WTC11 (cell line): ENCODE measurements at regions of chr12 and their contacts with region 1.

Region 1: GRCh38 chr12:52416383-52416750 is 10.2 kb upstream of the KRT82 start:
- DNase-seq: no peak
- ATAC-seq: no peak
- H3K4me3 Mint-ChIP-seq: no peak overlapping the region
- H3K27ac Mint-ChIP-seq: no peak overlapping the region
- H3K4me1 Mint-ChIP-seq: peaks cover 9% of the 10 kb centered on the region
- H3K27me3 Mint-ChIP-seq: no peaks in the 10 kb centered on the region
- CTCF ChIP-seq: no peak

Region 2: DNA sequence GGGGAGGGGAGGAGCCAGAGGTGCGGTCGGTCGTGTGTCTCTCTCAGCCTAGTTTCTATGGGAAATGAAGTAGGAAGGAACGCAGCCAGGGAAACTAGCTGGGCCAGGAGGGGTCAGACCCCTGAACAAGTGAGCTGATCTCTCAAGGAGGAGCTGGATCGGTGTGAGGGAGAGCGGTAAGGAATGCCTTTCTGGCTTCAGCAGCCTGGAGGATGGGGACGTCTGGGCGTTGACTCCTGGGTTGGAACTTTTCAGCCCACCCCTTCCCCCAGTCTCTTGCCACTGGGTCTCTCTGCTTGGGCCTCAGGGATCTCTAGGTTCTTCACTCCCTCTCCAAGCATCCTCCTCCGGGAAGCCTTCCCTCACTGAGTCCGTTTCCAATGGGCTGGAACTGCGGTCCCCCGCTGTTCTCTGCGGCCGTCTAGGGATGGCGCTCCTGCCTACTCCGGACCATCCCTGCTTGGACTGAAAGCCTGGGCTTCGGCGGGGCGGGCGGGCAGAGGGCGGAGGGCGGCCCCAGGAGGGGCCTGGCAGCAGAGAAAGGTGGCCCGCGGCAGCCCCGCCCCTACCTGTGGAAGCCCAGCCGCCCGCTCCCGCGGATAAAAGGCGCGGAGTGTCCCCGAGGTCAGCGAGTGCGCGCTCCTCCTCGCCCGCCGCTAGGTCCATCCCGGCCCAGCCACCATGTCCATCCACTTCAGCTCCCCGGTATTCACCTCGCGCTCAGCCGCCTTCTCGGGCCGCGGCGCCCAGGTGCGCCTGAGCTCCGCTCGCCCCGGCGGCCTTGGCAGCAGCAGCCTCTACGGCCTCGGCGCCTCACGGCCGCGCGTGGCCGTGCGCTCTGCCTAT is 183.5 kb before region 1 on chr12 and contains the start of gene KRT7:
- CTCF ChIA-PET with region 1: no interaction called
- POLR2A ChIA-PET with region 1: no interaction called
- DNase-seq: peak; percentile 58
- ATAC-seq: peak; percentile 61
- H3K4me3 Mint-ChIP-seq: peak within 1 kb of the TSS; percentile 78
- H3K27ac Mint-ChIP-seq: no peak within 1 kb of the TSS; the same call in 1 of the 2 replicates
- H3K4me1 Mint-ChIP-seq: peaks cover 50% of the 10 kb centered on the region
- H3K27me3 Mint-ChIP-seq: peaks cover 51% of the 10 kb centered on the region
- CTCF ChIP-seq: no peak
- total RNA-seq, gene KRT7: 10.6 to 11.5 TPM (median 11.4 TPM) in 3 replicates

Region 3: GRCh38 chr12:52404956-52405355 is 11.4 kb before region 1 on chr12:
- CTCF ChIA-PET with region 1: interaction called, 10 read pairs
- POLR2A ChIA-PET with region 1: no interaction called
- DNase-seq: no peak
- ATAC-seq: no peak
- H3K4me3 Mint-ChIP-seq: no peak overlapping the region
- H3K27ac Mint-ChIP-seq: no peak overlapping the region
- H3K4me1 Mint-ChIP-seq: peaks cover 9% of the 10 kb centered on the region
- H3K27me3 Mint-ChIP-seq: no peaks in the 10 kb centered on the region; the same call in 1 of the 2 replicates
- CTCF ChIP-seq: no peak

Region 4: DNA sequence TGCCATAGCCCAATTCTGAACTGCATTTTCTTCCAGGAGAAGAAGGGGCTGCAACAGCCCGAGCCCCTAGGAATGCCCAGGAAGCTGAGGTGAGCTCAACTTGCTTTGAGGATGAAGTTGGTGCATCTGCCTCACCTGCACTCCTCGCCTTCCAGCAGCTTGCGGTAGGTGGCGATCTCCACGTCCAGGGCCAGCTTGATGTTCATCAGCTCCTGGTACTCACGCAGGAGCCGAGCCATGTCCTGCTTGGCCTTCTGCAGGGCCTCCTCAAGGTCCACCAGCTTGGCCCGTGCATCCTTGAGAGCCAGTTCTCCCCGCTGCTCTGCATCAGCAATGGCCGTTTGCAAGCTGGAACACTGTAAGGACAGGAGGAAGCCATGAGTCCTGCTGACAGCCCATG is 11.8 kb after region 1 on chr12:
- CTCF ChIA-PET with region 1: interaction called, 26 read pairs
- POLR2A ChIA-PET with region 1: no interaction called
- DNase-seq: peak; percentile 25
- ATAC-seq: no peak
- H3K4me3 Mint-ChIP-seq: no peak overlapping the region
- H3K27ac Mint-ChIP-seq: no peak overlapping the region
- H3K4me1 Mint-ChIP-seq: peaks cover 4% of the 10 kb centered on the region; the same call in 1 of the 2 replicates
- H3K27me3 Mint-ChIP-seq: peaks cover 2% of the 10 kb centered on the region; the same call in 1 of the 2 replicates
- CTCF ChIP-seq: no peak

Region 5: DNA sequence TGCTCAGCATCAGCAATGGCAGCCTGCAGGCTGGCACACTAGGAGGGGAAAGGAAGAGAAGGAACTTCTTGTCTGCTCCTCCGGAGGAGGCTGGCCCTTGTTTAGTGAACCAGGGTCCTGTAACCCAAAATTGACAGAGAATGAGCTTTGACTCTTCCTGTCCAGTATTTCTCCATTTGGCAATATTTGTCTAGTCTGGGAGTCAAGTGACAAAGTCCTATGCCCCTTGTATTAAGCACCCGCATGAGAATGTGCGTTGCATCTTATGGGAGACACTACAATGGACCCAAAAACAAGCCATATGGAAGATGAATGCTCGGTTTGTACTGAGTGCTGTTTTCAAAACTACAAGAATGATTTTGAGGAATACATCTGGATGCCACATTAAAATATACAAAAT is 53.5 kb after region 1 on chr12:
- CTCF ChIA-PET with region 1: no interaction called
- POLR2A ChIA-PET with region 1: no interaction called
- DNase-seq: no peak
- ATAC-seq: no peak
- H3K4me3 Mint-ChIP-seq: no peak overlapping the region
- H3K27ac Mint-ChIP-seq: no peak overlapping the region
- H3K4me1 Mint-ChIP-seq: no peaks in the 10 kb centered on the region
- H3K27me3 Mint-ChIP-seq: no peaks in the 10 kb centered on the region
- CTCF ChIP-seq: no peak

Region 6: DNA sequence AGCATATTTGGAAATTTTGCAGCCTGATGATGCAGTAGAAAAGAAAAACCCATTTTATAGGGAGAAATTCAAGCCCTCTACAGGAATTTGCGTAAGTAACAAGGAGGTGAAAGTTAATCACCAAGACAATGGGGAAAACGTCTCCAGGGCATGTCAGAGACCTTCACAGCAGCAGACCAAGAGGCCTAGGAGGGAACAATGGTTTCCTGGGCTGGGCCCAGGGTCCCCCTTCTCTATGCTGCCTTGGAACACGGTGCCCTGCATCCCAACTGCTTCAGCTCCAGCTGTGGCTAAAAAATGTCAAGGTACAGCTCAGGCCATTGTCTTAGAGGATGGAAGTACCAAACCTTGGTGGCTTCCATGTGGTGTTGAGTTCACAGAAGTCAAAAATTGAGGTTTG is 63.7 kb after region 1 on chr12:
- CTCF ChIA-PET with region 1: no interaction called
- POLR2A ChIA-PET with region 1: no interaction called
- DNase-seq: no peak
- ATAC-seq: peak; percentile 72
- H3K4me3 Mint-ChIP-seq: no peak overlapping the region
- H3K27ac Mint-ChIP-seq: no peak overlapping the region
- H3K4me1 Mint-ChIP-seq: peaks cover 4% of the 10 kb centered on the region
- H3K27me3 Mint-ChIP-seq: peaks cover 4% of the 10 kb centered on the region; the same call in 1 of the 2 replicates
- CTCF ChIP-seq: no peak

Region 7: DNA sequence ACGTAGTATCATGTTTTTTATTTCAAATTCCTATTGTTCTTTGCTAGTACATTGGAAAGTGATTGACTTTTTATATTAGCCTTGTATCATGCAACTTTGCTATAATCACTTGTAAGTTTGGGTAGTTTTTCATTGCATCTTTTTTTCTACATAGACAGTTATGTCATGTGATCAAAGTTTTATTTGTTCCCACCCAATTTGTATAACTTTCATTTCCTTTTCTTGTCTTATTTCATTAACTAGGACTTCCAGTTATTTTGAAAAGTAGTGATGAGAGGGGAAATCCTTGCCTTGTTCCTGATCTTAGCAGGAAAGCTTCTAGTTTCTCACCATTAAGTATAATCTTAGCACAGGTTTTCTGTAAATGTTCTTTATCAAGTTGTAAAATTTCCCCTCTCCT is 86.5 kb after region 1 on chr12:
- CTCF ChIA-PET with region 1: no interaction called
- POLR2A ChIA-PET with region 1: no interaction called
- DNase-seq: no peak
- ATAC-seq: no peak
- H3K4me3 Mint-ChIP-seq: no peak overlapping the region
- H3K27ac Mint-ChIP-seq: no peak overlapping the region
- H3K4me1 Mint-ChIP-seq: peaks cover 8% of the 10 kb centered on the region; the same call in 1 of the 2 replicates
- H3K27me3 Mint-ChIP-seq: peaks cover 2% of the 10 kb centered on the region; the same call in 1 of the 2 replicates
- CTCF ChIP-seq: no peak